Astrocyte of the cerebellum (primary cell): ENCODE measurements at regions of chr1 and their contacts with region 1.

Region 1: DNA sequence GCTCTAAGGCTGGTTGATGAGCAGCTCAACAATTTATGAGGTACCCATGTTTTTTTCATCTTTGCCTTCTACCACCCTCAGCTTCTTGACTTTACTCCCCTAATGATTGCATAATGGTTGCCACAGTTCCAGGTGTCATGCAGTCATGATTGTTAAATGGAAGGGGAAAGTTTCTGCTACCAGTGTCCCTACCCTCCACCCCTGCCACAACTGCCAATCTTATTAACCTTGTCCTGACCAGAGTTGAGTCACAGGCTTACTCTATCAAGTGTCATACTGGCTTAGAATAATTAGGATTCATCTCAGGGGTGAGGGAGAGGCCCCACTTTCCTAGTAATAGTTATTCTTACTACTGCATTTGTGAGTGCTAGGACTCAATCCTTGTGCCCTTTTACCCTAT is 7.9 kb upstream of the FUBP1 start:
- DNase-seq: no peak
- H3K4me3 ChIP-seq: no peak overlapping the region
- CTCF ChIP-seq: no peak

Region 2: GRCh38 chr1:77950873-77951272 is 35.9 kb before region 1 on chr1:
- in situ Hi-C with region 1: loop called (anchors 5 kb)
- DNase-seq: no peak
- H3K4me3 ChIP-seq: no peak overlapping the region
- CTCF ChIP-seq: no peak

Region 3: DNA sequence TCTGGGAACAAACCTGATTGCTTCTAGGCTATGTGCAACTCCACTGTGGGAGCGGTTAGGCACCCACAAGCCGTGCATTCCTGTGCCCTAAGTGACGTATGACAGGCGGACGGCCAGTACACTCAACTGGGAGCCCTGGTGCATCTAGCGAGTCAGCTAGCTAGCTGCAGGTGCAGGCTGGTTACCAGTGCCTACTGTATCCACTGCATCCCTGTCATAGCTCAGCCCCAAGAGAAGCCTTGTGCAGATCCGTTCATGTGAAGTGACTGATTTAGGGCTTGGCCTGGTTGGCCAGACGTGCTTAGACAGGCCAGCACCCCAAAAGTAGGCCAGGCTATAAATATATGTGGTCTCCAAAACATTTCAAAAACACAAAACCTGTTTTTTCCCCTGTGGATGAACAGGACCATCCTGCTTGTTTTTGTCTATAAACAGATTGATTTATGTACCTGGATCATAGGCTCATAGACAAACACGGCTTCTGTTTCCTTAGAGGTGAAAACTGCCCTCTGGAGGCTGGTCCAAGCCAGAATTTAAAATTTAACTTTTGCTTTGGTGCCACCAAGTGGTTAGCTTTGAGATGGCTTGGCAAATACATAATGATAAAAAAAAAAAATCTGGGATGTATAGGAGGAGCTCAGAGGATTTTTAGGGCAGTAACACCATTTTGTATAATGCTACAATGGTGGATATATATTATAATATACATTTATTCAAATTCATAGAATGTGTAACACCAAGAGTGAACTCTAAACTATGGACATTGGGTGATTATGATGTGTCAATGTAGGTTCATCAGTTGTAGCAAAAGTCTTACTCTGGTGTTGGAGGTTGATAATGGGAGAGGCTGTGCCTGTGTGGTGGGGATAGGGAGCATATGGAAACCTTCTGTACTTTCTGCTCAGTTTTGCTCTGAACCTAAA is 127.5 kb after region 1 on chr1:
- in situ Hi-C with region 1: loop called (anchors 5 kb)
- DNase-seq: peak; percentile 81
- H3K4me3 ChIP-seq: no peak overlapping the region
- CTCF ChIP-seq: peak; percentile 73